HepG2 (cell line): ENCODE measurements at regions of chr4 and their contacts with region 1.

Region 1: GRCh38 chr4:77203380-77204197 is 46.6 kb downstream of the CCNG2 start:
- DNase-seq: peak; percentile 63
- ATAC-seq: peak; percentile 92
- H3K4me3 ChIP-seq: no peak overlapping the region
- H3K27ac ChIP-seq: no peak overlapping the region
- H3K4me1 ChIP-seq: no peaks in the 10 kb centered on the region
- H3K27me3 ChIP-seq: peaks cover 0 to 43% of the 10 kb centered on the region in 2 experiments; a peak in 2 of 5 replicates
- CTCF ChIP-seq: peak; percentile 86
- EP300 ChIP-seq: no peak
- POLR2A ChIP-seq: no peak
- RAD21 ChIP-seq: peak; percentile 71

Region 2: GRCh38 chr4:76949276-76950051 is 254.1 kb before region 1 on chr4 and contains the start of gene SEPTIN11:
- CTCF ChIA-PET with region 1: no interaction called
- POLR2A ChIA-PET with region 1: no interaction called
- in situ Hi-C with region 1: no loop called
- intact Hi-C with region 1: loop called (anchors 2 kb)
- DNase-seq: peak; percentile 85
- ATAC-seq: peak; percentile 86
- H3K4me3 ChIP-seq: peak within 1 kb of the TSS; percentile 88 to 94 (median 92)
- H3K27ac ChIP-seq: peak within 1 kb of the TSS; percentile 82
- H3K4me1 ChIP-seq: peaks cover 29% of the 10 kb centered on the region
- H3K27me3 ChIP-seq: no peaks in the 10 kb centered on the region
- CTCF ChIP-seq: no peak
- EP300 ChIP-seq: 0 out of 4 replicates have a peak, but pooled peaks of 1 of the 2 experiments have one; percentile 16
- POLR2A ChIP-seq: peak in 1 of 2 experiments; percentile 91; a peak in 2 of 4 replicates
- RAD21 ChIP-seq: 0 out of 2 replicates have a peak, but pooled peaks have one; percentile 7
- total RNA-seq, gene SEPTIN11: 47.3 and 87.4 TPM in 2 replicates

Region 3: GRCh38 chr4:77044461-77045150 is 159.0 kb before region 1 on chr4:
- CTCF ChIA-PET with region 1: interaction called, 5 read pairs
- POLR2A ChIA-PET with region 1: no interaction called
- in situ Hi-C with region 1: no loop called
- intact Hi-C with region 1: loop called (anchors 2 kb)
- DNase-seq: peak; percentile 9
- ATAC-seq: peak; percentile 39
- H3K4me3 ChIP-seq: no peak overlapping the region
- H3K27ac ChIP-seq: no peak overlapping the region
- H3K4me1 ChIP-seq: peaks cover 13% of the 10 kb centered on the region
- H3K27me3 ChIP-seq: no peaks in the 10 kb centered on the region
- CTCF ChIP-seq: peak; percentile 58
- EP300 ChIP-seq: no peak
- POLR2A ChIP-seq: no peak
- RAD21 ChIP-seq: no peak

Region 4: DNA sequence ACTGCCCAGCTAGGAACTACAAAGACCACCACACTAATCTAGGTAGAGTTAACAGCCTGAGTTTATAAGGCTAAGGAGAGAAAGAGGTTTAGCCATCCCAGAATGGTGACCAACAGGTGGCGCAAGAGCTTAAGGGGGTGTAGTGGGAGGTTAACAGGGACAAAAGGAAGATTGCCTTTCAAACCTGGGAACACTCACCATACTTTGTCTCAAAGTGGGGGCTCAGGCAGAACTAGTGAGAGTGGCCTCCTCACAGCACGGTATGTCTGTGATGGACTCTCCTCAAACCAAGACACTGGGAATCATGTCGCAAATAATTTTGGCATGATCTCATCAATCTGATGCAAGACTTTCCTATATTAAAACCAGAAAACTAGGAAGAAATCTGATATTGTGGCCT is 151.2 kb before region 1 on chr4:
- CTCF ChIA-PET with region 1: interaction called, 7 read pairs
- POLR2A ChIA-PET with region 1: no interaction called
- in situ Hi-C with region 1: no loop called
- intact Hi-C with region 1: loop called (anchors 1 kb)
- DNase-seq: peak; percentile 35
- ATAC-seq: peak; percentile 85
- H3K4me3 ChIP-seq: no peak overlapping the region
- H3K27ac ChIP-seq: no peak overlapping the region
- H3K4me1 ChIP-seq: no peaks in the 10 kb centered on the region
- H3K27me3 ChIP-seq: no peaks in the 10 kb centered on the region
- CTCF ChIP-seq: peak; percentile 67
- EP300 ChIP-seq: no peak
- POLR2A ChIP-seq: no peak
- RAD21 ChIP-seq: no peak

Region 5: GRCh38 chr4:77095101-77095821 is 108.3 kb before region 1 on chr4:
- CTCF ChIA-PET with region 1: interaction called, 25 read pairs
- POLR2A ChIA-PET with region 1: no interaction called
- in situ Hi-C with region 1: loop called (anchors 5 kb)
- intact Hi-C with region 1: loop called (anchors 1 kb)
- DNase-seq: peak; percentile 49
- ATAC-seq: peak; percentile 100
- H3K4me3 ChIP-seq: no peak overlapping the region
- H3K27ac ChIP-seq: no peak overlapping the region
- H3K4me1 ChIP-seq: no peaks in the 10 kb centered on the region
- H3K27me3 ChIP-seq: no peaks in the 10 kb centered on the region
- CTCF ChIP-seq: peak; percentile 87
- EP300 ChIP-seq: no peak
- POLR2A ChIP-seq: no peak
- RAD21 ChIP-seq: peak; percentile 41; the same call in 1 of the 2 replicates

Region 6: DNA sequence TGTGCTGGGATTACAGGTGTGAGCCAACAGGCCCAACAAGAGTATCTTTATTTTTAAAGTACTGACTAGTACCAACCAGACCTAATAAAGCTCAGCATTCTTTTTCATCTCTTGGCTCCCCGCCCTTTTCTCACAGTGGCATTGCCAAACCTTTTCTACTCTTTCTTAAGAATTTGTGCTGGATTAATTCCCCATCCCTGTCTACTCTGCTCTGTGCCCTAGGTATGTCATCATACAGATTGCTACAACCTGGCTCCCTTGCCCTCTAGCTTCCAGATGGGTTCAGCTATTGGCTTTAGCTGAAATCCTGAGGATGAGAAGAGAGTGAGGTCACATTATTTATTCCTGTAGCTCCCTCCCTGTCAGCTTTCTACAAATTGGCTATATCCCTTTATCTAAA is 92.9 kb before region 1 on chr4:
- CTCF ChIA-PET with region 1: no interaction called
- POLR2A ChIA-PET with region 1: no interaction called
- in situ Hi-C with region 1: no loop called
- intact Hi-C with region 1: no loop called
- DNase-seq: no peak
- ATAC-seq: no peak
- H3K4me3 ChIP-seq: no peak overlapping the region
- H3K27ac ChIP-seq: no peak overlapping the region
- H3K4me1 ChIP-seq: no peaks in the 10 kb centered on the region
- H3K27me3 ChIP-seq: no peaks in the 10 kb centered on the region
- CTCF ChIP-seq: no peak
- EP300 ChIP-seq: no peak
- POLR2A ChIP-seq: no peak
- RAD21 ChIP-seq: no peak

Region 7: GRCh38 chr4:77120886-77121508 is 82.6 kb before region 1 on chr4:
- CTCF ChIA-PET with region 1: no interaction called
- POLR2A ChIA-PET with region 1: no interaction called
- in situ Hi-C with region 1: no loop called
- intact Hi-C with region 1: loop called (anchors 1 kb)
- DNase-seq: peak; percentile 3
- ATAC-seq: peak; percentile 88
- H3K4me3 ChIP-seq: no peak overlapping the region
- H3K27ac ChIP-seq: no peak overlapping the region
- H3K4me1 ChIP-seq: no peaks in the 10 kb centered on the region
- H3K27me3 ChIP-seq: peaks cover 0 to 15% of the 10 kb centered on the region in 2 experiments; a peak in 3 of 5 replicates
- CTCF ChIP-seq: peak; percentile 32; the same call in 1 of the 2 replicates
- EP300 ChIP-seq: no peak
- POLR2A ChIP-seq: no peak
- RAD21 ChIP-seq: no peak

Region 8: DNA sequence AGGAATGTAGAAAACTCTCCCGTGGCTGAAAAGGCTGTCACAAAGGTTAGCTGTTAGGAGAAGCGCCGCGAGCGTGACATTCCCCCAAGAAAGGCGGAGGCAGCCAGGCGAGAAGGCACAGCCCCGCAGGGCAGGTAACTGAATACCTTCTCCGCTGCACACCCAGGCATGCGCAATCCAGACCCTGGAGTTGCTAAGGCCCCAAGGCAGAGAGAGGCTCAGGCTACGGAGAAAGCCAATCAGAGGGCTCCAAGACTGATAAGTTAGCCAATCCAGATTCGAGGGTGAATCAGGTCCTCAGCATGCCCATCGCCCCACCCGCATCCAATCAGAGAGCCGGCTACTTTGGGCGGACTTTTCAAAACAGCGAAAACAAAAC is 47.1 kb before region 1 on chr4:
- CTCF ChIA-PET with region 1: no interaction called
- POLR2A ChIA-PET with region 1: no interaction called
- in situ Hi-C with region 1: no loop called
- intact Hi-C with region 1: loop called (anchors 5 kb)
- DNase-seq: peak; percentile 99
- ATAC-seq: peak; percentile 90
- H3K4me3 ChIP-seq: peak overlapping the region; percentile 88 to 99 (median 99)
- H3K27ac ChIP-seq: peak overlapping the region; percentile 93
- H3K4me1 ChIP-seq: peaks cover 27% of the 10 kb centered on the region
- H3K27me3 ChIP-seq: peaks cover 0 to 3% of the 10 kb centered on the region in 2 experiments; a peak in 1 of 5 replicates
- CTCF ChIP-seq: no peak
- EP300 ChIP-seq: peak in 1 of 2 experiments; percentile 43; a peak in 1 of 4 replicates
- POLR2A ChIP-seq: peak in 1 of 2 experiments; percentile 70; a peak in 2 of 4 replicates
- RAD21 ChIP-seq: no peak

Region 9: GRCh38 chr4:77284036-77284435 is 80.4 kb after region 1 on chr4:
- CTCF ChIA-PET with region 1: no interaction called
- POLR2A ChIA-PET with region 1: no interaction called
- in situ Hi-C with region 1: no loop called
- intact Hi-C with region 1: no loop called
- DNase-seq: no peak
- ATAC-seq: no peak
- H3K4me3 ChIP-seq: no peak overlapping the region
- H3K27ac ChIP-seq: no peak overlapping the region
- H3K4me1 ChIP-seq: no peaks in the 10 kb centered on the region
- H3K27me3 ChIP-seq: no peaks in the 10 kb centered on the region
- CTCF ChIP-seq: no peak
- EP300 ChIP-seq: no peak
- POLR2A ChIP-seq: no peak
- RAD21 ChIP-seq: no peak